Activated CD8-positive, alpha-beta T cell treated with anti-CD3 and anti-CD28 coated beads for 36 hours (primary cell): ENCODE measurements at regions of chr1 and their contacts with region 1.

Region 1: GRCh38 chr1:211514030-211514754 is 22.2 kb upstream of the RD3 start:
- DNase-seq: peak; percentile 88
- ATAC-seq: peak; percentile 76
- H3K4me3 Mint-ChIP-seq: peak overlapping the region; percentile 42
- H3K27ac Mint-ChIP-seq: peak overlapping the region; percentile 33
- H3K4me1 Mint-ChIP-seq: peaks cover 24% of the 10 kb centered on the region
- H3K27me3 Mint-ChIP-seq: peaks cover 2% of the 10 kb centered on the region
- CTCF ChIP-seq: peak; percentile 77

Region 2: DNA sequence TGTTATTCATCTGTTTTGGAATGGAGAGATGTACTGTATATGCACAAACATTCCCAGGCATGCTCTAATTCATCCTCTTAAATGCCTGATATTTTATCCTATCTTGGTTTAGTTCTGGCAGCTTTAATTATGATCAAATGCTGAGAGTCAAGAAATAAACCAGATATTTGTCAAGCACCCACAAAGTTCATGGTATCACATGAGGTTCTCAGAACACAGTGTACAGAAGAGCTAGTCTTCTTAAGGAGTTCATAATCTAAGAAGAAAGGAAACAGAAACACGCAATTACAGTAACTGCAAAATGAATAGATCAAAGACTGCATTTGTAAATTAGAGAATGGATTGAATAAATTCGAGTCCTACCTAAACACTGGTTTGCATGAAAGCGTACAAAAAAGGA is 322.0 kb before region 1 on chr1:
- CTCF ChIA-PET with region 1: no interaction called
- POLR2A ChIA-PET with region 1: no interaction called
- intact Hi-C with region 1: no loop called
- DNase-seq: no peak
- ATAC-seq: no peak
- H3K4me3 Mint-ChIP-seq: no peak overlapping the region
- H3K27ac Mint-ChIP-seq: no peak overlapping the region
- H3K4me1 Mint-ChIP-seq: no peaks in the 10 kb centered on the region
- H3K27me3 Mint-ChIP-seq: no peaks in the 10 kb centered on the region
- CTCF ChIP-seq: no peak

Region 3: DNA sequence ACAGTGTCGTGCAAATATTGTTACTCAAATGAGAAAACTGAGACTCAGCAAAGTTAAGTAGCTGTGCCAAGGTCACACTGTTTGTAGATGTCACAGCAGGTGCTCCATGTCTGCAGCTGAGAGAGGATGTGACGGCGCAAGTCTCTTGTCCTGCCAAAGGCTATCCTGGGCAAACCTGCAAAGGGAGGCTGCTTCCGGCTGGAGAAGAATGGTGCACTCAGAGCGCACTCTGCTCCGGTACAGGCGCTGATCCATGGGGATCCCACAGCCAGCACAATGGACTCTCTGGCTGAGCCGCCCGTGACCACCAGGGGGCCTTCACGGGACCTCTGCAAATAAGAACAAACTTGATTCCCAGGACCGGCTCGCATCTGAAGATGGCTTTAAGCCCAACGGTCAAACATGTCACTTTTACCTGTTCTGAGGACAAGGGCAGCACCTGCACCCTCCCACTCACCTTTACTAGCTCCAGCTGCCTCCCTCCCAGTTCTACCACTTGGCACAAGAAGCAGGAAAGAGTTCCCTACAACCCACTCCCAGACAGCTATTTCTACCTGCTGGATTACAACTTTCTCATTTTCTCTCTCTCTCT is 44.2 kb before region 1 on chr1:
- CTCF ChIA-PET with region 1: interaction called, 38 read pairs
- POLR2A ChIA-PET with region 1: interaction called, 3 read pairs
- intact Hi-C with region 1: no loop called
- DNase-seq: peak; percentile 63
- ATAC-seq: peak; percentile 49
- H3K4me3 Mint-ChIP-seq: no peak overlapping the region
- H3K27ac Mint-ChIP-seq: no peak overlapping the region
- H3K4me1 Mint-ChIP-seq: no peaks in the 10 kb centered on the region
- H3K27me3 Mint-ChIP-seq: peaks cover 1% of the 10 kb centered on the region
- CTCF ChIP-seq: peak; percentile 83

Region 4: GRCh38 chr1:211484755-211485479 is 29.3 kb before region 1 on chr1:
- CTCF ChIA-PET with region 1: interaction called, 46 read pairs
- POLR2A ChIA-PET with region 1: no interaction called
- intact Hi-C with region 1: no loop called
- DNase-seq: no peak
- ATAC-seq: no peak
- H3K4me3 Mint-ChIP-seq: no peak overlapping the region
- H3K27ac Mint-ChIP-seq: no peak overlapping the region
- H3K4me1 Mint-ChIP-seq: no peaks in the 10 kb centered on the region
- H3K27me3 Mint-ChIP-seq: peaks cover under 1% of the 10 kb centered on the region
- CTCF ChIP-seq: no peak

Region 5: GRCh38 chr1:211527006-211527405 is 12.8 kb after region 1 on chr1:
- CTCF ChIA-PET with region 1: interaction called, 16 read pairs
- POLR2A ChIA-PET with region 1: no interaction called
- intact Hi-C with region 1: no loop called
- DNase-seq: peak; percentile 37
- ATAC-seq: peak; percentile 94
- H3K4me3 Mint-ChIP-seq: no peak overlapping the region
- H3K27ac Mint-ChIP-seq: no peak overlapping the region
- H3K4me1 Mint-ChIP-seq: peaks cover 12% of the 10 kb centered on the region
- H3K27me3 Mint-ChIP-seq: no peaks in the 10 kb centered on the region
- CTCF ChIP-seq: no peak

Region 6: GRCh38 chr1:211654838-211655787 is 140.9 kb after region 1 on chr1:
- CTCF ChIA-PET with region 1: interaction called, 30 read pairs
- POLR2A ChIA-PET with region 1: no interaction called
- intact Hi-C with region 1: loop called (anchors 2 kb)
- DNase-seq: peak; percentile 92
- ATAC-seq: peak; percentile 97
- H3K4me3 Mint-ChIP-seq: no peak overlapping the region
- H3K27ac Mint-ChIP-seq: no peak overlapping the region
- H3K4me1 Mint-ChIP-seq: no peaks in the 10 kb centered on the region
- H3K27me3 Mint-ChIP-seq: no peaks in the 10 kb centered on the region
- CTCF ChIP-seq: peak; percentile 98